ENCODE measurements at regions of chr1 and their contacts with region 1.

Region 1: GRCh38 chr1:181189691-181190363 is 101.3 kb downstream of the IER5 start:
- DNase-seq: peak; percentile 54
- H3K4me3 ChIP-seq: no peak overlapping the region
- H3K27ac ChIP-seq: no peak overlapping the region
- H3K4me1 ChIP-seq: no peaks in the 10 kb centered on the region
- H3K27me3 ChIP-seq: peaks cover 0 to 13% of the 10 kb centered on the region in 2 experiments
- CTCF ChIP-seq: peak; percentile 95 to 97
- POLR2A ChIP-seq: no peak

Region 2: DNA sequence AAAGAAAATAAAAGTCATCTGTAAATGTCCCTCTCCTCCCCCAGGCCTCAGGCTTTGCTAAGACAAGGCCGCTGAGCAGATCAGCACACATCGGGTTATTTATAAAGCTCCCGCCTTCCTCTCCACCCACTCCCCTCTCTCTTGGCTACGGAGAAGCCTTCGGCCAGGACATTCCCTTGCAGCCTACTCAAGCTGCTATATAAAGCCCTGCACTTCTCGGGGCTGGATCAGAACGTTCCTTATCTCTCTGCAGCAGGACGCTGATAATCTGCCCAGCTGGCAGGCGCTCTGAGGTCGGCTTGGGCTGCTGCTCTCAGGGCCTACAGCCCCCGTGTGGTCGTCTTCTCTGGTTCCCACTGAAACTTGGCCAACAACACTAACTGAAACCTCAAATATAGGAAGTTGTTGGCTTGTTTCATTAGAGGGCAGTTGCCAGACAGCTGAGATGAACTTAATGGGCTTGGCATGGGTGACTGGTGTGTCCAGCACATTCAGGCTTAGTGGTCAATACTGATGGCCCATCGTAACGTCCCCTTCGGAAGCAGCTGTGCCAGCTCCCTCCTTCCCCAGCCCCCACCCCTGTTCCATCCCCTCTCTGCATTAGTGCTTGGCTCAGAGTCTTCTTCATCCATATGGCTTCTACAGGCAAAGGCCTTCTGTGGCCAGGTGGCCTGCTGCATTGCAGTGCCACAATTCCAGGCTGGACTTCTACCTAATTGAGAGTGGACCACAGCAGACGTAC is 36.8 kb before region 1 on chr1:
- CTCF ChIA-PET with region 1: no interaction called
- POLR2A ChIA-PET with region 1: no interaction called
- dilution Hi-C with region 1: no loop called
- intact Hi-C with region 1: no loop called
- DNase-seq: peak; percentile 98
- H3K4me3 ChIP-seq: no peak overlapping the region
- H3K27ac ChIP-seq: no peak overlapping the region
- H3K4me1 ChIP-seq: peaks cover 7% of the 10 kb centered on the region
- H3K27me3 ChIP-seq: no peaks in the 10 kb centered on the region
- CTCF ChIP-seq: peak; percentile 31 to 72
- POLR2A ChIP-seq: no peak

Region 3: GRCh38 chr1:181232532-181232931 is 42.7 kb after region 1 on chr1:
- CTCF ChIA-PET with region 1: interaction called, 14 read pairs
- POLR2A ChIA-PET with region 1: no interaction called
- dilution Hi-C with region 1: no loop called
- intact Hi-C with region 1: no loop called
- DNase-seq: no peak
- H3K4me3 ChIP-seq: no peak overlapping the region
- H3K27ac ChIP-seq: no peak overlapping the region
- H3K4me1 ChIP-seq: no peaks in the 10 kb centered on the region
- H3K27me3 ChIP-seq: no peaks in the 10 kb centered on the region
- CTCF ChIP-seq: no peak
- POLR2A ChIP-seq: no peak

Region 4: DNA sequence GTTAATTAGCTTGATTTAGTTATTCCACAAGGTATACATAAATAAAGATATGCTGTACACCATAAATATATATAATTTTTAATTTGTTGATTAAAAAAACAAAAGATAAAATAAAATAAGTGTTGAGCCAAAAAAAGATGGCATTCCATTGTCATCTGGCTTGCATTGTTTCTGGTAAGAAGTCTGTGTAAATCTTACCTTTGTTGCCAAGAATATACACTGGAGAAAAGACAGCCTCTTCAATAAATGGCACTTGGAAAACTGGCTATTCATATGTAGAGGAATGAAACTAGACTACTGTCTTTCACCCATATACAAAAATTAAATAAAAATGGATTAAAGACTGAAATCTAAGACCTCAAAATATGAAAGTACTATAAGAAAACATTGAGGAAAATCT is 95.2 kb after region 1 on chr1:
- CTCF ChIA-PET with region 1: no interaction called
- POLR2A ChIA-PET with region 1: no interaction called
- dilution Hi-C with region 1: no loop called
- intact Hi-C with region 1: no loop called
- DNase-seq: no peak
- H3K4me3 ChIP-seq: no peak overlapping the region
- H3K27ac ChIP-seq: no peak overlapping the region
- H3K4me1 ChIP-seq: no peaks in the 10 kb centered on the region
- H3K27me3 ChIP-seq: no peaks in the 10 kb centered on the region
- CTCF ChIP-seq: no peak
- POLR2A ChIP-seq: no peak

Region 5: GRCh38 chr1:181324797-181325616 is 135.2 kb after region 1 on chr1:
- CTCF ChIA-PET with region 1: no interaction called
- POLR2A ChIA-PET with region 1: no interaction called
- dilution Hi-C with region 1: no loop called
- intact Hi-C with region 1: loop called (anchors 10 kb)
- DNase-seq: no peak
- H3K4me3 ChIP-seq: no peak overlapping the region
- H3K27ac ChIP-seq: no peak overlapping the region
- H3K4me1 ChIP-seq: no peaks in the 10 kb centered on the region
- H3K27me3 ChIP-seq: peaks cover 0 to 2% of the 10 kb centered on the region in 2 experiments
- CTCF ChIP-seq: no peak
- POLR2A ChIP-seq: no peak

Region 6: DNA sequence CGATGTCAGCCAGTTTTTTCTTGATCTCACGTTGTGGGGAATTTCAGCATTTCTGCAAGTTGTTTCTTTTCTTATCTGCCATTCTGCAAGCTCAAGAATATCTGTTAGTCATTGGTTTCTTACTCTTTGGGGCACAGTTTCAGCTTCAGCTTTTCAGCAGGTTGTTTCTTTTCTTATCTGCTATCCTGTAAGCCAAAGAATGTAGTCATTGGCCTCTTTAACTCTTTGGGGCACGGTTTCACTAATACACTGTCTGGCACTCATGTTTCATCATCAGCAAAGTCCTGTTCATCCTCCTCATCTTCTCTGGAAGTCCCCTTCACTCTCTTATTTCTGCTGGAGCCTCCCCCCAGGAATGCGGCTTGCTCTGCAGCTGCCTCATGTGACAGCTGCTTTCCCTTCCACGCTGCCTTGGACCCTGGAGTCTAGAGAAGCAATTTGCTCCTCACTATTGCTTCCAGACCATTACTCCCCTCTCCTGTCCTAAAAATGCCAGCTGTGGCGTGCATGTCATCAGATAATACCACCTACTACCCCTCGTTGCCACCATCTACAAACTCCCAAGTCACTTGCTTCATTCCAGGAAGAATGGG is 226.5 kb after region 1 on chr1:
- CTCF ChIA-PET with region 1: interaction called, 53 read pairs
- POLR2A ChIA-PET with region 1: no interaction called
- dilution Hi-C with region 1: no loop called
- intact Hi-C with region 1: no loop called
- DNase-seq: no peak
- H3K4me3 ChIP-seq: no peak overlapping the region
- H3K27ac ChIP-seq: no peak overlapping the region
- H3K4me1 ChIP-seq: no peaks in the 10 kb centered on the region
- H3K27me3 ChIP-seq: no peaks in the 10 kb centered on the region
- CTCF ChIP-seq: no peak
- POLR2A ChIP-seq: no peak

Region 7: DNA sequence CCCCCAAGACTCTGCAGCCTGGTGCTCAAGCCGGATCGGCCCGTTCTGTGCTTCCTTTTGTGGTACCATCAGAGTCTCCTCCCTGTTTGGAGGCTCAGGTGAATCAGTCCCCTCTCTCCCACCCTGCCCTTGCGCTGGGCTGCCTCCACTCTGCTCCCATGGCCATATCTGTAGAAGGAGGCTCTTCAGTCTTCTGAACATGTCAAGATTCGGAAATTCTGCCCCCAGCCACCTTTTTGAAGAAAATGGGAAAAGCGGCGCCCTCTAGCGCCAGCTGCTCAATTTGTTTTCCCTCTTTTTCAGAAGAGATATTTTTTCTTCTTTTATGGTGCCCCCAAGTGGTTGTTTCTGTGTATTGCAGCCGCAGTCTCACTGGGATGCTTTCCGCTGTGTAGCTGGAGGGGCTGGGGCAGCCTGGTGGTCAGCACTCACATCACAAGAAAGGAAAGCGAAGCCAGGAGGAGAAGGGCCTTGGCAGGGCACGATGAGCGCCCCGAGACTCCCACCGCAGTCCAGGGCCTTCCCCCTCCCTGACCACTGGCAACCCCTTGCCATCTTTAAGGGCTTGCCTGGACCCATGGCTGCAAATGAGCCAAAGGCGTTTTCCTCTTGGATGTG is 235.1 kb after region 1 on chr1:
- CTCF ChIA-PET with region 1: interaction called, 297 read pairs
- POLR2A ChIA-PET with region 1: no interaction called
- dilution Hi-C with region 1: no loop called
- intact Hi-C with region 1: loop called (anchors 1 kb)
- DNase-seq: peak; percentile 71
- H3K4me3 ChIP-seq: no peak overlapping the region
- H3K27ac ChIP-seq: no peak overlapping the region
- H3K4me1 ChIP-seq: no peaks in the 10 kb centered on the region
- H3K27me3 ChIP-seq: no peaks in the 10 kb centered on the region
- CTCF ChIP-seq: peak; percentile 95 to 99
- POLR2A ChIP-seq: no peak

Region 8: DNA sequence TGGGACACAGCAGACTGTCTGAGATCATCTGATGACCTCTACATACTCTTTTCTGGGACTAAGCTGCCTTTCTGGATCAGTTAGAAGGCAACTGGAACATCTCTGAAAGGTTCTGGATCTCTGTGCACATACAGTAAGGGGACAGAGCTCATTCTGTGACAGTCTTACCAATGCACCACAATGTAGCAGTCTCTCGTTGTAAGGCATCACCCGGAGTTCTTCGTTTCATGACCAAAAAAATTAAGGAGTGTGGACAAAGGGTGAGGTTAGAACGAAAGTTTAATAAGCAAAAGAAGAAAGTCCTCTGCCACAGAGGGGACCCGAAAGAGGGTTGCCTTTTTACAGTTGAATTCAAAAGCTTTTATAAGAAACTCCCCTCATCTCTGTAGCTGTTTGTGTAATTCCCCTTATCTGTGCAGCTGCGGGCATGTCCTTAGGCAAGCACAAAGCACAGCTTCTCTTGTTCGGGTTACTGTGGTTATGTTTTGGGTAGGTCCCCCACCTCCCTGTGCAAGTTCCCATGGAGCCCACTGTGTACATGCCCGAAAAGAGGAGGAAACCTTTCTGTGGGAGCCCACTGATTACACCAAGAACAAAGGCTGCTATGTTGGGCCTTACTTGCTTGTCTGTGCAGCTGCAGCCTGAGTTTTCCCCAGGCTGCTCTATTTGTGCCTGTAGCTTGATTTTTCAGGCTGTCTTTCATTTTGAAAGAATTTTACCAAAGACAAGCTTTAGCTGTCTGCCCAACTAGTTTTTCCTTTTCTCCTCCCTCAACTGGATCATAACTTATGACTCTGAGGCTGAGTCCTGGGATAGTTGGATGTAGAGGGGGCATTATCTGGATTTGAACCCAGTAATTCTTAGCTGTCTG is 240.4 kb after region 1 on chr1:
- CTCF ChIA-PET with region 1: interaction called, 297 read pairs
- POLR2A ChIA-PET with region 1: no interaction called
- dilution Hi-C with region 1: no loop called
- intact Hi-C with region 1: loop called (anchors 1 kb)
- DNase-seq: no peak
- H3K4me3 ChIP-seq: no peak overlapping the region
- H3K27ac ChIP-seq: no peak overlapping the region
- H3K4me1 ChIP-seq: no peaks in the 10 kb centered on the region
- H3K27me3 ChIP-seq: no peaks in the 10 kb centered on the region
- CTCF ChIP-seq: no peak
- POLR2A ChIP-seq: no peak

Region 9: GRCh38 chr1:181936768-181937581 is 747.1 kb after region 1 on chr1:
- CTCF ChIA-PET with region 1: no interaction called
- POLR2A ChIA-PET with region 1: no interaction called
- dilution Hi-C with region 1: no loop called
- intact Hi-C with region 1: loop called (anchors 2 kb)
- DNase-seq: no peak
- H3K4me3 ChIP-seq: no peak overlapping the region
- H3K27ac ChIP-seq: no peak overlapping the region
- H3K4me1 ChIP-seq: no peaks in the 10 kb centered on the region
- H3K27me3 ChIP-seq: no peaks in the 10 kb centered on the region
- CTCF ChIP-seq: no peak
- POLR2A ChIP-seq: no peak

Measured in endothelial cell of umbilical vein (primary cell).